ENCODE measurements at regions of chr22 and their contacts with region 1.

Region 1: DNA sequence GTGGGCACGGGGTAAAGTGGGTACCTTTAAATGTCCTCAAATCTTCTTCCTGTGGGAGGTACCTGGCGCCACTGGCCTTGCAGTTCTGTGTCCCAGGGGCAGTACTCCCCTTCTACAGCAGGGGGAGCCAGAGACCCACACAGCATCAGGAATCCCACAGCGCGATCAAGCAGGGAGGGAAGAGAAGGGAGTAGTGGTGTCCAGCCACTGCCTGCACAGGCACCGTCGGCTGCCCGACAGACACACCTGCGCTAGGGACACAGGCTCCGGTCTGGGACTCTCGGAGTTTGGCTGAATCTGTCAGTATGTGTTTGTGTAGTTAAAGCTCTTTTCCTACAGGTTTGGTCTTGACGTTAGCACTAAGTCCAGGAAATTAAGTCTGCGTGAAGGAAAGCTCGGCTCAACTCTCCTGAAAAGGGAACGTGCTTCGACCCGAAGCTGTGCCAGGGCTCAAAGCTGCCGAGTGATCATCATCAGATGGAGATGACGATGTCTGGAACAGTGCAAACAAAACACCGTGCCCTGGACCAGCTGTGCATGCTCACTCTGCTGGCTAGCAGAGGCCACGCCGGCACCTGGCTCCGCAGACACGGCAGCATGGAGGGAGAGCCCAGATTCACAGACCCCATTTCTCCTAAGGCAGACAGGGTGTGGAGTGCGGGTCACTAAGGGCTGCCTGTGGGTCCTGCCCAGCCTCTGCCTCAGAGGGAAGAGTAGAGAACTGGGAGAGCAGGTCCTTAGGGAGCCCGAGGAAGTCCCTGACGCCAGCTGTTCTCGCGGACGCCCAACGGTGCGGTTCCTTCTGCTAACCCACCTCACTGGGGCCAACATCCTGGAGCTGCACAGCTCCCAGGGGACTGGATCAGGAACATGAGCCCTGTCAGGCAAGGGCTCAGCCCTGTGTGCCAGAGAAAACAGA is 56.0 kb upstream of the BID start:
- DNase-seq: peak; percentile 86 to 92
- ATAC-seq: peak; percentile 86 to 95 (median 88)
- H3K4me3 ChIP-seq: no peak overlapping the region
- H3K27ac ChIP-seq: peak overlapping the region; percentile 62
- H3K4me1 ChIP-seq: peaks cover 36% of the 10 kb centered on the region
- H3K27me3 ChIP-seq: no peaks in the 10 kb centered on the region
- CTCF ChIP-seq: peak; percentile 99

Region 2: DNA sequence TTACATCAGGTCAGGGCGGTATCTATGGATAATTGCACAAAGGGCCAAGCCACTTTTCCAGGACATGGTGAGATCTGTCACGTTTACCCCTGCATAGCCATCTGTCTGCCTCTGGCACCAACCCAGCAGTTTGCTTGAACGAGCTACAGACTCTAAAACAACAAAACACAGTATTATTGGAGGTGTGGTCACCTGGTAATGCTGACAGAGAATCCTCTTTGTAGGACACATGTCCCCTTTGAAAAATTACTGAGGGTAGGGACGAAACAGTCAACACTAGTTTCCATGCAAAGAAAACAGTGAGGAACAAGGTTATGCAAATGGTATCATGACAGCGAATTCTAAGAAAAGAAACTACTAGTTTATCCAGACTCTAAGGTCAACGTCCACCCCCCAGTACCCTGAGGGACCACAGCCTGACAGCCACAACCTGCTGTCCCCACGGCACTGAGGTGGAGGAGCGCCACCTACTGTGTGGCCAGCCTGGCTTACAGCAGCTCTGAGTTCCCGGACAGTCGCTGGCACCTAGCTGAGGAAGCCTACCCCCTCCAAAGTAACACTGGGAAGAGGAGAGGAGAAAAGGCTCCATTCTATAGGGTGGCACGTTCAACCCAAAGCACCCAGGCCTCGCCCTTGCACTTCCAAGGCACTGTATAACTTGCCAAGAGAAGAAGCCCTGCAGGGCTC is 61.3 kb after region 1 on chr22:
- intact Hi-C with region 1: loop called (anchors 1 to 2 kb)
- DNase-seq: peak; percentile 54 to 87
- ATAC-seq: peak; percentile 58 to 73 (median 66)
- H3K4me3 ChIP-seq: no peak overlapping the region
- H3K27ac ChIP-seq: peak overlapping the region; percentile 94
- H3K4me1 ChIP-seq: peaks cover 41% of the 10 kb centered on the region
- H3K27me3 ChIP-seq: no peaks in the 10 kb centered on the region
- CTCF ChIP-seq: peak; percentile 72

Region 3: GRCh38 chr22:18031695-18032454 is 201.6 kb after region 1 on chr22:
- intact Hi-C with region 1: loop called in 1 of 2 experiments (anchors 5 kb)
- DNase-seq: peak; percentile 63 to 89
- ATAC-seq: peak; percentile 69 to 72 (median 70)
- H3K4me3 ChIP-seq: no peak overlapping the region
- H3K27ac ChIP-seq: peak overlapping the region; percentile 79
- H3K4me1 ChIP-seq: peaks cover 42% of the 10 kb centered on the region
- H3K27me3 ChIP-seq: no peaks in the 10 kb centered on the region
- CTCF ChIP-seq: no peak

Measured in psoas muscle (tissue), 8 donors.